ENCODE measurements at regions of chr17 and their contacts with region 1.

Region 1: DNA sequence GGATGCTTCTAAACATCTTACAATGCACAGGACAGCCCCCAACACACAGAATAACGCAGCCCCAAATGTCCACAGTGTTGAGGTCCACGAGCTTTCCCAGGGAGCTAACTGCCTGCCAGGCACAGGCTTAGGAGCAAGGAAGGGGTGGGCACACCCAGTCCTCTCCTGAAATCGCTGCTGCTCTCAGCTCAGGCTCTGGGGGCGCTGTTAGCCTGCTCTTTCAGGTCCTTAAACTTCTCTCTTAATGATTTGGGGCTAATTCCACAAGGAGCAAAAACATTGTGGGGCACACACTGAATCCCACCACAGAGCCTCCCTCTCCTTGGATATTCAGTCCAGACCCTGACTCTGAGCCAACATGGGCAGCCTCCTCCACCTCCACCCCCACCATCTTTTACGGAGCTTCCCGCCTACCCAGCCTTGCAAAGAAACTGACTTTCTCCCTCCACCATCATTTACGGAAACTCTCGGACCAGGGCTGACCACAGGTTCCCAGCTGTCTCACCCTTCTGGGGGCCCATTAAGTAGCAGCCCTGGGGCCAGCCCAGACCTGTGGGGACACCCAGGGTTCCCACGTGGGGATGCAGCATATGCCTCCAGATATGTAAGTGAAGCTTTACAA is 1.1 kb downstream of the CD300H start:
- DNase-seq: peak in 4 of 9 donors; percentile 12 to 29 (median 21)
- ATAC-seq: no peak
- H3K4me3 ChIP-seq: no peak overlapping the region
- H3K4me3 Mint-ChIP-seq: no peak overlapping the region
- H3K27ac ChIP-seq: no peak overlapping the region
- H3K27ac Mint-ChIP-seq: no peak overlapping the region
- H3K4me1 ChIP-seq: no peaks in the 10 kb centered on the region
- H3K4me1 Mint-ChIP-seq: peaks cover 0 to 14% (median 8%) of the 10 kb centered on the region in 7 donors
- H3K27me3 ChIP-seq: no peaks in the 10 kb centered on the region
- H3K27me3 Mint-ChIP-seq: peaks cover 19 to 36% (median 28%) of the 10 kb centered on the region in 5 donors

Region 2: DNA sequence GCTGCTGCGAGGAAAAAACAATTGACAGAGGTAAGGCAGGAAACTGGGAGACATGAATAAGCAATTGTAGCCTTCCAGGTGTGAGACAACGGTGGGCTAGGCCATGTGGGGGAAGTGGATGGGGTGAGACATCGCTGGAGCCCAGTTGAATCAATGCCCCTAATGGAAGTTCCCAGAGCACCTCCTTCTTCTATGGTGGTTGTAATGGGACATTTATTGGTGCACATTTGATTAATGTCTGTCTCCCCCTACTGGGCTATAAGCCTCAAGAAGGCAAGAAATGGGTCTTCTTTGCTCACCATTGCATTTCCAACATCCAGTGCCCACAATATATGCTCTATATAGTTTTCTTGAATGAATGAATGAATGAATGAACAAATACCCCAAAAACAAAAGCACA is 80.0 kb after region 1 on chr17:
- CTCF ChIA-PET with region 1: no interaction called
- POLR2A ChIA-PET with region 1: no interaction called
- intact Hi-C with region 1: loop called in 1 of 2 experiments (anchors 2 kb)
- DNase-seq: peak in 2 of 9 donors; percentile 7 to 9
- ATAC-seq: peak; percentile 69
- H3K4me3 ChIP-seq: no peak overlapping the region
- H3K4me3 Mint-ChIP-seq: no peak overlapping the region
- H3K27ac ChIP-seq: no peak overlapping the region
- H3K27ac Mint-ChIP-seq: no peak overlapping the region
- H3K4me1 ChIP-seq: no peaks in the 10 kb centered on the region
- H3K4me1 Mint-ChIP-seq: peaks cover 0 to 11% (median under 1%) of the 10 kb centered on the region in 7 donors
- H3K27me3 ChIP-seq: no peaks in the 10 kb centered on the region
- H3K27me3 Mint-ChIP-seq: peaks cover 20 to 71% (median 37%) of the 10 kb centered on the region in 5 donors

Measured in naive thymus-derived CD4-positive, alpha-beta T cell (primary cell).